GM10248 (cell line): ENCODE measurements at regions of chr9 and their contacts with region 1.

Region 1: DNA sequence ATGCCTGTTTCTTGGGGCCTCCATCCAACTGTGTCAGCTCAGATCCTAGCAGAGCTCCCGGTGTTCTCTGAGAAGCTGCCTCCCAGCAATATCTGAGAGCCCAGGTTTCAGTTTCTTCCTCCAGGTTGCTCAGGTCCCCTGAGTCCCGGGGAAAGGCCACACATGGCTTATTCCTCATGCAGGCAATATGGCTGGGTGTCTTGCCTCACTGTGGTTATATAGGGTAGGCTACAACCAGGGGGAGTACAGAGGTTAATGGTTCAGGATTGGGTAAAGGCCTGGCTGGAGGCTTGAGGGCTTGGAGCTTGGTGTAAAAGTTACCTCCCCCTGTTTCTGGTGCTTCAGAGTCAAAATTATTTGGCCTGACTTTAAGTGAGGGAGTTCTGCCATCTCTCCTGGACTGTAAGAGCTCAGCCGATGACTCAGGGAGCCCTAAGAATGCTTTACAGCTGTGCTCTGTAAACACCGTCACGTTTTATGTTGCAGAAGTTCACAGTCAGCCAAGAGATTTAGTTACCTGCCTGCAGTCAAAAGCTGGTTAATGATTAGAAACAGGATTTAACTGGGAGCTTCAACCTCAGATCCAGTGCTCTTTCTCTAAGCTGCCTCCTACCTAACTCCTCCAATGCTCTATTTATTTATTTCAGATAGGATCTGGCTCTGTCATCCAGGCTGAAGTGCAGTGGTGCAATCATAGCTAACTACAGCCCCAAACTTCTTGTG is 24.3 kb upstream of the UBAP2 start:
- DNase-seq: no peak
- CTCF ChIP-seq: no peak

Region 2: DNA sequence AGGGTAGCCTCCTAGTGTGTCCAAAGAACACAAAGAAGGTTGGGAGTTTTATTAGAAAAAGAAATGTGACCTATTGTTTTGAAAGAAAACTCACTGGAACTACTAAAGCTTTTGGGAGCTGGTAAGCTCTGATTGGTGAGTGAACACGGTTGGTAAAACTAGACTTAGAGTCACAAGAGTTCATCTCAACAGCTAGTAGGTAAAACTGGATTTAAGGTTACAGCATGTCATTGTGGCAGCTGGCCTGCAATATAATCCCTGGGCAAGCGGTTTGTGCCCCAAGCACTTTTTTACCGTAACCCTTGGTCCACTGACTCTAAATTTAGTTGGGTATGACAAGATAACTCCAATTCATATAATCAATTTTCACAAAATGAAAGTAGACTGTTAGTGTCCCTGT is 71.7 kb before region 1 on chr9:
- CTCF ChIA-PET with region 1: no interaction called
- POLR2A ChIA-PET with region 1: no interaction called
- DNase-seq: no peak
- CTCF ChIP-seq: no peak

Region 3: GRCh38 chr9:34048923-34049697 is 23.9 kb before region 1 on chr9:
- CTCF ChIA-PET with region 1: interaction called, 11 read pairs
- POLR2A ChIA-PET with region 1: no interaction called
- DNase-seq: peak; percentile 93
- CTCF ChIP-seq: no peak

Region 4: GRCh38 chr9:34059281-34059680 is 13.7 kb before region 1 on chr9:
- CTCF ChIA-PET with region 1: interaction called, 16 read pairs
- POLR2A ChIA-PET with region 1: no interaction called
- DNase-seq: no peak
- CTCF ChIP-seq: no peak

Region 5: GRCh38 chr9:34084562-34084961 is 11.5 kb after region 1 on chr9:
- CTCF ChIA-PET with region 1: interaction called, 29 read pairs
- POLR2A ChIA-PET with region 1: no interaction called
- DNase-seq: no peak
- CTCF ChIP-seq: no peak

Region 6: GRCh38 chr9:34139477-34140146 is 66.6 kb after region 1 on chr9:
- CTCF ChIA-PET with region 1: no interaction called
- POLR2A ChIA-PET with region 1: no interaction called
- DNase-seq: no peak
- CTCF ChIP-seq: peak; percentile 14